Panc1 (cell line): ENCODE measurements at regions of chr5 and their contacts with region 1.

Region 1: DNA sequence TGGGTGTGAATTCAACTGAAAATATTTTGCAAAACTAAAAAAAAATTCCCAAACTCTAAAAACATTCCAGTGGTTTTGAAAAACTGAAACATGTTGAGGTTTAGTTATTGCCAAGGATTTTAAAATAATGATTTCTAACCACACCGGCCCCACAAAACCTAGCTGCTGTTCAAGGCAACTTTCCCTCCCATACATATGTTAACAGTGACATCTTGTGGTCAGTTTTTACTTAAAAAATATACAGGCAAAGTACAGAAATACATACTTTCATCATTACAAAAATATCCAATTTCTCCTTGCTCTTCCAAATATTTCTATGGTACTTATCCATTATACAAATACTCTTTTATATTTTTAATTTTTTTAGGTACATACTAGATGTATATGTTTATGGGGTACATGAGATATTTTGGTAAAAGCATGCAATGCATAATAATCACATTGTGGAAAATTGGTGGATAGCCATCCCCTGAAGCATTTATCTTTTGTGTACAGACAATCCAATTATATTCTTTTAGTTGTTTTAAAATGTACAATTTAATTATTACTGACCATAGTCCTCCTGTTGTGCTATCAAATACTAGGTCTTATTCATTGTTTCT is 34.4 kb upstream of the MRPS30 start:
- DNase-seq: peak; percentile 32
- ATAC-seq: no peak
- H3K4me3 ChIP-seq: no peak overlapping the region
- H3K27ac ChIP-seq: no peak overlapping the region
- H3K4me1 ChIP-seq: no peaks in the 10 kb centered on the region
- H3K27me3 ChIP-seq: no peaks in the 10 kb centered on the region
- CTCF ChIP-seq: peak; percentile 43; the same call in 1 of the 2 replicates

Region 2: GRCh38 chr5:43661102-43661501 is 1113.3 kb before region 1 on chr5:
- CTCF ChIA-PET with region 1: no interaction called
- POLR2A ChIA-PET with region 1: no interaction called
- in situ Hi-C with region 1: no loop called
- intact Hi-C with region 1: loop called (anchors 10 kb)
- DNase-seq: peak; percentile 8
- ATAC-seq: no peak
- H3K4me3 ChIP-seq: no peak overlapping the region
- H3K27ac ChIP-seq: no peak overlapping the region
- H3K4me1 ChIP-seq: no peaks in the 10 kb centered on the region
- H3K27me3 ChIP-seq: no peaks in the 10 kb centered on the region
- CTCF ChIP-seq: peak; percentile 49; the same call in 1 of the 2 replicates

Region 3: DNA sequence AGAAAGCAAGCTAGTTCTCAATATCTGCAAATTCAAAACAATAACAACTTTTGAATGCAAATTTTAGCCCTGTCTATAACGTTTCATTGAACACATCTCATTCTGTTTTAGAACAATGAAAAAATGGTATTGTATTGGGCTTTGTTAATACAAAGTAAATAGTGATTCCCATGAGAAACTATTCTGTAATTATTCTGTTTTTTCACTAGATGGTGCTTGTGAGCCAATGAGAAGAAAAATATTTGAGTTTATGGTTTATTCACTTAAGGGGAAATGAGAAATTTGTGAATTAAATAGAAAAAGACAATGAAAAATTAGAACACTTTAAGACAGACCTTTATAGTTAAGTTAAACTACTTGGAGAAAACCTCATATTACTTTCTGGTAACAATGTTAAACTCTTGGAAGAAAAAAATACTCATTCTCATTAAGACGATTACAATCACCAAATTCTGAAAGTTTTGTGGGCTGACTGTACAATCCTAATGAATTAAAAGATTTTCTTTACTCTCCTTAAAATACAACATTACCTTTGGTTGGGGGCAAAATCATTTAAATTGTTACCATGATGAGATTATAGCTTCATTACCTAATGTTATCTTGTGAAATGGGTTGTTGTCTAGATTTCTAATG is 1044.4 kb before region 1 on chr5:
- CTCF ChIA-PET with region 1: no interaction called
- POLR2A ChIA-PET with region 1: no interaction called
- in situ Hi-C with region 1: no loop called
- intact Hi-C with region 1: loop called (anchors 2 kb)
- DNase-seq: no peak
- ATAC-seq: no peak
- H3K4me3 ChIP-seq: no peak overlapping the region
- H3K27ac ChIP-seq: no peak overlapping the region
- H3K4me1 ChIP-seq: no peaks in the 10 kb centered on the region
- H3K27me3 ChIP-seq: no peaks in the 10 kb centered on the region
- CTCF ChIP-seq: peak; percentile 59; the same call in 1 of the 2 replicates

Region 4: GRCh38 chr5:44536650-44537260 is 237.6 kb before region 1 on chr5:
- CTCF ChIA-PET with region 1: no interaction called
- POLR2A ChIA-PET with region 1: no interaction called
- in situ Hi-C with region 1: no loop called
- intact Hi-C with region 1: loop called (anchors 2 kb)
- DNase-seq: peak; percentile 18
- ATAC-seq: no peak
- H3K4me3 ChIP-seq: no peak overlapping the region
- H3K27ac ChIP-seq: no peak overlapping the region
- H3K4me1 ChIP-seq: no peaks in the 10 kb centered on the region
- H3K27me3 ChIP-seq: no peaks in the 10 kb centered on the region
- CTCF ChIP-seq: peak; percentile 74

Region 5: DNA sequence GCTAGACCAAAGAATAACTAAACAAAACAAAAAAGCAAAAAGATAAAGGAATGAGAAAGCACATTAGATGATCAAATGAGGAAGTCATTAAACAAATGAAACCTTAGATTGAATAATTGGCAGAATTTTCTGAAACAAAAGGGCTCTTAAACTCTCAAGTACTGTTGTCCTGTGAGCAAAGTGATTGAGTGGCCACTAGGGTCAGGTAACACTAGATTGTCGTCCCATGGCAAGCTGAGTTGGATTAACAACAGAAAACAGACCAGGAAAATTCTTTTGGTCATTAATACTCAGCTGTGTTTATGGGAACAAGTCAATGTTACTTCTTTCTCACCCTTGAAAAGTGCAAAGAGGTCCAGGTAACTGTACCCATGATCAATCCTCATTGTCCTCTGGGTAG is 47.3 kb before region 1 on chr5:
- CTCF ChIA-PET with region 1: no interaction called
- POLR2A ChIA-PET with region 1: no interaction called
- in situ Hi-C with region 1: no loop called
- intact Hi-C with region 1: no loop called
- DNase-seq: no peak
- ATAC-seq: no peak
- H3K4me3 ChIP-seq: no peak overlapping the region
- H3K27ac ChIP-seq: no peak overlapping the region
- H3K4me1 ChIP-seq: no peaks in the 10 kb centered on the region
- H3K27me3 ChIP-seq: no peaks in the 10 kb centered on the region
- CTCF ChIP-seq: no peak